ENCODE measurements at regions of chr6 and their contacts with region 1.

Region 1: GRCh38 chr6:62808565-62809293 is 402.5 kb upstream of the FKBP1C start:
- DNase-seq: no peak
- ATAC-seq: no peak
- H3K4me3 ChIP-seq: no peak overlapping the region
- H3K27ac ChIP-seq: no peak overlapping the region
- H3K4me1 ChIP-seq: no peaks in the 10 kb centered on the region
- H3K27me3 ChIP-seq: no peaks in the 10 kb centered on the region
- CTCF ChIP-seq: no peak

Region 2: DNA sequence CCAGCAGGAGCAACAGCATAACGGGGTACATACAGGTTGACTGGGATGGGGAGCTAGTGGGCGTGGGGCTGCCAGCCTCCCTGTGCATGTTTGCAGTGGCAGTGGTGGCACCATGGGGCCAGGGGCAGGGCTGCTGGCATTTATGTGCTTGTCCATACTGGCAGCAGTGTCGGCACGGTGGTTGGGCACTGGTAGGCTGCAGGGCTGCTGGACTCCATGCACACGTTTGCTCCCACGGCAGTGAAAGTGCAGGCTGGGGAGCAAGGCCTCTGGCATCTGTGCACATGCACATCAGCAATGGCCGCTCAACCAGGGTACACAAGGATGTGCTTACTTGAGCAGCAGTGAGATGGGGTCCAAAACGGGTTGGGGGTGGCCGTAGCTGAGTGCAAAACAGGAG is 363.2 kb before region 1 on chr6:
- intact Hi-C with region 1: no loop called
- DNase-seq: no peak
- ATAC-seq: no peak
- H3K4me3 ChIP-seq: no peak overlapping the region
- H3K27ac ChIP-seq: no peak overlapping the region
- H3K4me1 ChIP-seq: no peaks in the 10 kb centered on the region
- H3K27me3 ChIP-seq: no peaks in the 10 kb centered on the region
- CTCF ChIP-seq: no peak

Region 3: GRCh38 chr6:62797190-62797589 is 11.5 kb before region 1 on chr6:
- intact Hi-C with region 1: loop called in 1 of 10 experiments (anchors 2 kb)
- DNase-seq: no peak
- ATAC-seq: no peak
- H3K4me3 ChIP-seq: no peak overlapping the region
- H3K27ac ChIP-seq: no peak overlapping the region
- H3K4me1 ChIP-seq: no peaks in the 10 kb centered on the region
- H3K27me3 ChIP-seq: no peaks in the 10 kb centered on the region
- CTCF ChIP-seq: no peak

Region 4: DNA sequence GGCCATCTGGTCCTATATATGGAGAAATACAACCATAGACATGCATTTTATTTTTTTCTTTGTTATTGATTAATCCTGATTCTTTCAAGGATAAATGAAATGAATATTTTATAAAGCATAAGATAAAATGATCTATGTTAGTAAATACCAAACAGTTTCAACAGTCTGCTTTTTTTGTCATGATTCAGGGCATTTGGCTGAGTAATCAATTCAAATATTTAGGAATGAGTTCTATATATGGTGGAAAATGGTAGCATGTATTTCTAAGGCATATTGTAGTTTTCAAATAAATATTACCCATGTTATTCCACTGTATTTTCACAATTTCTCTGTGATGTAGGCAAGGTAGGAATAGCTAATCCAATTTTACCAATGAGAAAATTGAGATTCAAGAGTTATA is 115.0 kb after region 1 on chr6:
- intact Hi-C with region 1: no loop called
- DNase-seq: no peak
- ATAC-seq: no peak
- H3K4me3 ChIP-seq: no peak overlapping the region
- H3K27ac ChIP-seq: no peak overlapping the region
- H3K4me1 ChIP-seq: no peaks in the 10 kb centered on the region
- H3K27me3 ChIP-seq: no peaks in the 10 kb centered on the region
- CTCF ChIP-seq: no peak

Region 5: DNA sequence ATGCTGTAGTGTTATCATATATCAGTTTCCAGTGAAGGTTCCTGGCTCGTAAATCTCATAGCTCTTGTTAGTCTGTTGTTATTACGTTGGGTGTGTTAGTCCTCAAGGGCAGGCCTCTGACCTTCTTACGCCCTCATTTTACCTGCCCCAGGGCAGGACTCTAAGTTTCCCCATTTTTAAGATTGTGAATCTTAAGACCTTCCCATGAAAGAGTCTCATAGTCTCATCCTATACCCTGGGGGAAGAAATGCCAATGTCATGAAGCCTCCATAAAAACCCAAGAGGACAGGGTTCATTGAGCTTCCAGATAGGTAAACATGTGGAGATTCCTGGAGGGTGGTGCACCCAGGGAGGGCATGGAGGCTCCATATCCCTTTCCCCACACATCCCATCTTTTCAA is 138.7 kb after region 1 on chr6:
- intact Hi-C with region 1: no loop called
- DNase-seq: no peak
- ATAC-seq: no peak
- H3K4me3 ChIP-seq: no peak overlapping the region
- H3K27ac ChIP-seq: no peak overlapping the region
- H3K4me1 ChIP-seq: no peaks in the 10 kb centered on the region
- H3K27me3 ChIP-seq: no peaks in the 10 kb centered on the region
- CTCF ChIP-seq: no peak

Region 6: GRCh38 chr6:63504777-63505384 is 696.2 kb after region 1 on chr6:
- intact Hi-C with region 1: no loop called
- DNase-seq: no peak
- ATAC-seq: no peak
- H3K4me3 ChIP-seq: no peak overlapping the region
- H3K27ac ChIP-seq: no peak overlapping the region
- H3K4me1 ChIP-seq: peaks cover 0 to 6% (median 0%) of the 10 kb centered on the region in 9 donors
- H3K27me3 ChIP-seq: no peaks in the 10 kb centered on the region
- CTCF ChIP-seq: no peak

Measured in heart right ventricle (tissue), 16 donors.